CD14-positive monocyte (primary cell): ENCODE measurements at regions of chr7 and their contacts with region 1.

Region 1: GRCh38 chr7:33932832-33933468 is 27.6 kb downstream of the BMPER start:
- DNase-seq: peak; percentile 7 to 43 (median 33)
- H3K4me3 ChIP-seq: no peak overlapping the region
- H3K4me3 Mint-ChIP-seq: no peak overlapping the region
- H3K27ac ChIP-seq: no peak overlapping the region
- H3K27ac Mint-ChIP-seq: peak overlapping the region in 1 of 7 donors; percentile 42
- H3K4me1 ChIP-seq: no peaks in the 10 kb centered on the region
- H3K4me1 Mint-ChIP-seq: no peaks in the 10 kb centered on the region
- H3K27me3 ChIP-seq: peaks cover 0 to 2% of the 10 kb centered on the region in 2 donors
- H3K27me3 Mint-ChIP-seq: peaks cover 7 to 20% (median 9%) of the 10 kb centered on the region in 3 donors
- CTCF ChIP-seq: peak; percentile 87

Region 2: GRCh38 chr7:32694182-32694581 is 1238.8 kb before region 1 on chr7:
- intact Hi-C with region 1: loop called in 1 of 2 experiments (anchors 10 kb)
- DNase-seq: no peak
- H3K4me3 ChIP-seq: no peak overlapping the region
- H3K4me3 Mint-ChIP-seq: no peak overlapping the region
- H3K27ac ChIP-seq: no peak overlapping the region
- H3K27ac Mint-ChIP-seq: no peak overlapping the region
- H3K4me1 ChIP-seq: peaks cover 8 to 9% of the 10 kb centered on the region in 2 donors
- H3K4me1 Mint-ChIP-seq: peaks cover 12% of the 10 kb centered on the region
- H3K27me3 ChIP-seq: no peaks in the 10 kb centered on the region
- H3K27me3 Mint-ChIP-seq: peaks cover 0 to 2% (median 0%) of the 10 kb centered on the region in 3 donors
- CTCF ChIP-seq: no peak

Region 3: DNA sequence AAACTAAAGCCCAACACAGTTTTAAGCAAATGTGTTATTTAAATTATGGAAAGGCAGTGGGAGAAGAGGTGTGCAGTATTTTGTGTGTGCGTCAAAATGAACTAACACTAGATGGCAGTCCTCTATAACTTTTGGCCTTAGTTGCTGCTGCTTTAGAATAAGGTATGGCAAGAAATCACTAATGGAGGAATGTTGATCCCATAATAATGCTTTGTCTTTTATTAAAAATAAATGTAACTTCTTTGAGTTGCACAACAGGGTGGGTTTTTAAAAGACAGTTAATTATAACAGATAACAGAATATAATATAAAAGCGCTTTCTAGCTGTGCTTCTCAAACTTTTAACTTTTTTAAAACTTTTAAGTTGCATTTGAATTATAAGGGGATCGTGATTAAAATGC is 747.2 kb before region 1 on chr7:
- intact Hi-C with region 1: loop called (anchors 5 kb)
- DNase-seq: peak in 2 of 3 donors; percentile 8 to 10
- H3K4me3 ChIP-seq: no peak overlapping the region
- H3K4me3 Mint-ChIP-seq: no peak overlapping the region
- H3K27ac ChIP-seq: no peak overlapping the region
- H3K27ac Mint-ChIP-seq: no peak overlapping the region
- H3K4me1 ChIP-seq: no peaks in the 10 kb centered on the region
- H3K4me1 Mint-ChIP-seq: peaks cover 4% of the 10 kb centered on the region
- H3K27me3 ChIP-seq: no peaks in the 10 kb centered on the region
- H3K27me3 Mint-ChIP-seq: peaks cover 0 to 2% (median 0%) of the 10 kb centered on the region in 3 donors
- CTCF ChIP-seq: peak; percentile 69

Region 4: DNA sequence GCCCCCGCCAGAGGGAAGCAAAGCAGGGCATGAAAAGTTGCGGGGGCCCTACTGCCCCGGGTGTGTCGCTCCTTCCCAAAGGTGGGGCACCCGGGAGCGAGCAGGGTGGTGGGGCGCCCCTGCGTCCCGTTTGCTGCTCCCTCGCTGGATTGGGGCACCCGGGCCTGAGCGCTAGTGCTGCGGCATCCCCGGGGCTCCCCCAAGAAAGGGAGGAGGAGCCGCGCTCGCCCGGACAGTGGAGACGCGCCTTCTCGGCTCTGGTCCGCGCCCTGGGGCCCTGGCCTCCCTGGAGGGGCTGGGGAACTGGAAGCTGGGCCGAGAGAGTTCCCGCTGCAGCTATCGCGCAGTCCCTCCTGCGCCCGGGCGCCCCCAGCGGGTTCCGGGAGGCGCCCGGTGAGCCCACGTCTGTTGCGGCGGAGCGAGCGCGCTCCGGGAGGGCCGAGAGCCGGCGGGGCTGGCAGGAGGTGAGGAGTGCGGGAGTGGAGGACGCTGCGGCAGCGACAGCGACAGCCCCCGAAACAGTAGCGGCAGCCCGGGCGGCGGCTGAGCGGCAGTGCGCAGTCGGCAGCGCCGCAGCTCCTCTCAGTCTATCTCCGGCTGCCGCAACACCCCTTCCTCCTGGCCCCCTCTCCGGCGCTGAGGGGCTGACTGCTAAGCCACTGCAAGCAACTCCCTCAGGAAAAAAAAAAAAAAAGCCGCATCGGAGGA is 28.1 kb before region 1 on chr7:
- intact Hi-C with region 1: no loop called
- DNase-seq: no peak
- H3K4me3 ChIP-seq: peak overlapping the region in 1 of 3 experiments; percentile 26
- H3K4me3 Mint-ChIP-seq: peak overlapping the region; percentile 17 to 86
- H3K27ac ChIP-seq: no peak overlapping the region
- H3K27ac Mint-ChIP-seq: no peak overlapping the region
- H3K4me1 ChIP-seq: peaks cover 0 to 13% of the 10 kb centered on the region in 2 donors
- H3K4me1 Mint-ChIP-seq: peaks cover 8% of the 10 kb centered on the region
- H3K27me3 ChIP-seq: peaks cover 69 to 78% of the 10 kb centered on the region in 2 donors
- H3K27me3 Mint-ChIP-seq: peaks cover 63 to 79% (median 73%) of the 10 kb centered on the region in 3 donors
- CTCF ChIP-seq: no peak